ENCODE measurements at regions of chr2 and their contacts with region 1.

Region 1: GRCh38 chr2:140586379-140586778 is 1544.4 kb downstream of the LRP1B start:
- DNase-seq: peak; percentile 45
- H3K4me3 Mint-ChIP-seq: no peak overlapping the region
- H3K27ac Mint-ChIP-seq: no peak overlapping the region
- H3K4me1 Mint-ChIP-seq: peaks cover 18% of the 10 kb centered on the region
- H3K27me3 Mint-ChIP-seq: no peaks in the 10 kb centered on the region
- CTCF ChIP-seq: peak; percentile 46

Region 2: GRCh38 chr2:140695163-140695562 is 108.8 kb after region 1 on chr2:
- CTCF ChIA-PET with region 1: no interaction called
- intact Hi-C with region 1: loop called (anchors 5 kb)
- DNase-seq: peak; percentile 24
- H3K4me3 Mint-ChIP-seq: peak overlapping the region; percentile 22
- H3K27ac Mint-ChIP-seq: peak overlapping the region; percentile 96
- H3K4me1 Mint-ChIP-seq: peaks cover 10% of the 10 kb centered on the region
- H3K27me3 Mint-ChIP-seq: no peaks in the 10 kb centered on the region
- CTCF ChIP-seq: no peak